Heart left ventricle (tissue), 16 donors: ENCODE measurements at regions of chr2 and their contacts with region 1.

Region 1: DNA sequence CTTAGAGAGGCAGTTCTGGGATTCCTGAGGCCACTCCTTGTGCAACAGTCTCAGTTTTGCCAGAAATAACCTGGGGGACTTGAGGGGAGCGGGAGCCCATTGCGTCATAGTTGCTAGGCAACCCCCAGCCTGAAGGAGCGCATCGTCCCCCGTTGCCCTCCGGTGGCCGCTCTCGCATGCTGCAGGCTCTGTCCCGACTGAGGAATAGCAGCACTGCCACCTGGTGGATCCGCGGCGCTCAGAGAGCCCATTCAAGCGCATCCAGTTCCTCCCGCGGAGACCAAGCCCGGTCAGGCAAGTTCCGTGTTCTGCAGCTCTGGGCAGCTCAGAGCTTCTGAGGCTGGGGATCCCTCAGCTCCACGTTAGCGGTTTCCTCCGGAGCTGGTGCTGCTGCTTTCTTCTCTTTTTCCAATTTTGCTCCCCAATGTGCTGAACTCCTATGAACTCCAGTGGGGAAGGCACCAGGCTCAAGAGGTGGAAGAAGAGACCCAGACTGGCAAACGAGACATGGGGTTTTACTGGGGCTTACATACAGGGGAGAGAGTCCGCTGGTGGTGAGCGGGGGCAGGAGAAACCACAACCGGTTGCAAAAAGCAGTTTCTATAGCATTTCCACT is 15.1 kb downstream of the SLC4A3 start:
- DNase-seq: peak; percentile 93 to 98 (median 97)
- ATAC-seq: peak; percentile 28 to 63 (median 54)
- H3K4me3 ChIP-seq: no peak overlapping the region
- H3K27ac ChIP-seq: peak overlapping the region; percentile 32 to 99 (median 86)
- H3K4me1 ChIP-seq: peaks cover 0 to 76% (median 38%) of the 10 kb centered on the region in 12 donors
- H3K27me3 ChIP-seq: no peaks in the 10 kb centered on the region
- CTCF ChIP-seq: peak; percentile 90 to 99 (median 98)
- POLR2A ChIP-seq: peak in 1 of 2 donors; percentile 42

Region 2: DNA sequence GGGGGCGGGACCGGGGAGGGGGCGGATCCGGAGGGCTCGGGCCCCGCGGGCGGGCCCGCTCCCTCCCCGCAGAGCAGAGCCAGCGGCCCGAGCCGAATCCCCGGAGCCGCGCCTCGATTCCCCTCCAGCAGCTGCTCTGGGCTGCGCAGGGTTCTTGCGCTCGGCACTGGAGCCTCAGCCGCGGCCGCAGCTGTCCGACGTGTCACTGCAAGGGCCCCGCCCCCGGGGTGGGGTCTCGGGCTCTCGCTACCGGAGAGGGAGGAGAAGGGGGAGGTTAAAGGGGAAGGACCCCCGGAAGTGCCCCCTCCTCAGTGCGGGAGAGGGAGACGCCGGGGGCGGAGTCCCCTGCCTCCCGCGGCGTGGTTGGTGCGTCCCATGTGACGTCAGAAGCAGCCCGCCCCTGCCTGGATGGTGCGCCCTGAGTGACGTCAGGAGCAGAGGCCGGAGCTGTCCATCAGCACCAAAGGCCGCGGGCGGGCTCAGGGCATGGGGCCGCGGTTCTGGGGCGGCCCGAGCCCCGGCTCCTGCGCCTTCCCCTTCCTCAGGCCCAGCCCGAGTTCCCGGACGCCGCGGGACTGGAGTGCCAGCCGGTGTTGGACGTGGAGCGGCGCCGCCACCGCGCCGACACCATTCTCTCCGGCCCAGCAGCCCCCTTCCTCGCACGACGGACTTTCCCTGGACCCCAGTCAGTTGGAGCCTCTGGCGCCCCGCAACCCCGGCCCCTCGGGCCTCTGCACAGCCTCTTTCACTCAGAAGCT is 98.8 kb before region 1 on chr2 and contains the starts of genes CHPF and TMEM198:
- intact Hi-C with region 1: loop called (anchors 1 to 10 kb)
- DNase-seq: peak; percentile 97 to 99 (median 98)
- ATAC-seq: peak; percentile 92 to 95 (median 93)
- H3K4me3 ChIP-seq: peak within 1 kb of the TSS; percentile 46 to 92 (median 73)
- H3K27ac ChIP-seq: peak within 1 kb of the TSS; percentile 43 to 97 (median 88)
- H3K4me1 ChIP-seq: peaks cover 0 to 35% (median 25%) of the 10 kb centered on the region in 12 donors
- H3K27me3 ChIP-seq: peaks cover 0 to 21% (median 0%) of the 10 kb centered on the region in 9 donors
- CTCF ChIP-seq: no peak
- POLR2A ChIP-seq: peak in 1 of 2 donors; percentile 75
- total RNA-seq, gene CHPF: 77.9 to 196 (median 138) TPM
- total RNA-seq, gene TMEM198: 0.65 to 4.7 (median 2.3) TPM

Region 3: DNA sequence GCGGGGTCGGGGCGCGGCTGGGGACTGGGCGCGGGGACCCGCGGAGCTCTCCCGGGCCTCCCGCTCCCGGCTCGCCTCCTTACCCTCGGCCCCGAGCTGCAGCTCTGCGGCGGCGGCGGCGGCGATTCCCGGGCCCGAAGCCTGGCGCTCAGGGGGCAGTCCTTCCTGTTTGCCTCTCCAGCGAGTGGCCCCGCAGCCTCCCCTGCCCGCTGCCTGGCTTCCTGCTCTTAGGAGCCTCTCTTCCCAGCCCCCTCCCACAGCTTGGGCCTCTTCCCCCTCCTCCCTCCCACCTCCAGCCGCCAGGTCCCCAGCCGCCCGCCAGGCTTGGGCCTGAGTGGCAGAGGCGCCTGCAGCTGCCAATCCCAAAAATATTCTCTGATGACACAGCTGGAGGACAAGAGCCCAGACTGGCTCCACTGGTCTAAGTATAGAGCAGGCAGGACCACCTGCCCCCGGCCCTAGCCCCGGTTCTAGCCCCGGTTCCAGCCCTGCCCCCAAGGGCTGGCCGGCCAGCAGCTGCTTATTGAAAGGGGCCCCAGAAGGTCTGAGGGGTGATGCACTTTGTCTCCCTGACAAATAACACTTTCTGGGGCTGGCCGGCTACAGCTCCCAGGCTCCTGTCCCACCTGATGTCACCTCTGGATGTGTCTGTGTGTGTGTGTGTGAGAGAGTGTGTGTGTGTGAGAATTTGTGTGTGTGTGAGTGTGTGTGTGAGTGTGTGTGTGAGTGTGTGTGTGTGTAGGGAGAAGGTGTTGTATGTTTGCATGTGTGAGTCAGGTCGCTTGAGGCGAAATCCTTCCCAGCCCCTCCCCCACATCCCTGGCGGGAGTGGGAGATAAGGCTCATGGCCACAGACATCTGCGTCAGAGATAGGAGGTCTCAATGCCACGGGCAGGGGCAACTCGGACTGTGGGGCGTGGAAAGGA is 71.0 kb before region 1 on chr2 and contains the start of gene OBSL1:
- intact Hi-C with region 1: loop called in 2 of 10 experiments (anchors 5 to 10 kb)
- DNase-seq: peak; percentile 83 to 93 (median 91)
- ATAC-seq: peak; percentile 83 to 91 (median 84)
- H3K4me3 ChIP-seq: peak within 1 kb of the TSS; percentile 50 to 92 (median 68)
- H3K27ac ChIP-seq: peak within 1 kb of the TSS; percentile 71 to 96 (median 90)
- H3K4me1 ChIP-seq: peaks cover 0 to 33% (median 10%) of the 10 kb centered on the region in 12 donors
- H3K27me3 ChIP-seq: peaks cover 0 to 30% (median 0%) of the 10 kb centered on the region in 9 donors
- CTCF ChIP-seq: peak in 1 of 12 donors; percentile 15
- POLR2A ChIP-seq: peak in 1 of 2 donors; percentile 39
- total RNA-seq, gene OBSL1: 149 to 230 (median 178) TPM

Region 4: GRCh38 chr2:219627103-219628100 is 15.2 kb before region 1 on chr2 and contains the start of gene SLC4A3:
- intact Hi-C with region 1: loop called in 2 of 10 experiments (anchors 1 to 2 kb)
- DNase-seq: peak in 3 of 5 donors; percentile 52 to 79 (median 67)
- ATAC-seq: peak in 2 of 4 donors; percentile 8 to 14
- H3K4me3 ChIP-seq: peak within 1 kb of the TSS; percentile 44 to 71 (median 60)
- H3K27ac ChIP-seq: peak within 1 kb of the TSS; percentile 76 to 100 (median 95)
- H3K4me1 ChIP-seq: peaks cover 0 to 67% (median 6%) of the 10 kb centered on the region in 12 donors
- H3K27me3 ChIP-seq: peaks cover 0 to 12% (median 6%) of the 10 kb centered on the region in 9 donors
- CTCF ChIP-seq: peak in 2 of 12 donors; percentile 17 to 34
- POLR2A ChIP-seq: peak in 1 of 2 donors; percentile 34
- total RNA-seq, gene SLC4A3: 249 to 507 (median 428) TPM